Left ventricle myocardium superior (tissue), 1 donor: ENCODE measurements at regions of chr7 and their contacts with region 1.

Region 1: GRCh38 chr7:73721377-73721817 is 1.9 kb upstream of the STX1A start:
- DNase-seq: peak; percentile 86
- ATAC-seq: peak; percentile 85

Region 2: GRCh38 chr7:73612598-73613269 is 108.7 kb before region 1 on chr7:
- intact Hi-C with region 1: loop called (anchors 5 kb)
- DNase-seq: no peak
- ATAC-seq: peak; percentile 25

Region 3: GRCh38 chr7:74094224-74095101 is 373.1 kb after region 1 on chr7:
- intact Hi-C with region 1: no loop called
- DNase-seq: peak; percentile 78
- ATAC-seq: peak; percentile 77